Transverse colon (tissue), 4 donors: ENCODE measurements at regions of chr4 and their contacts with region 1.

Region 1: DNA sequence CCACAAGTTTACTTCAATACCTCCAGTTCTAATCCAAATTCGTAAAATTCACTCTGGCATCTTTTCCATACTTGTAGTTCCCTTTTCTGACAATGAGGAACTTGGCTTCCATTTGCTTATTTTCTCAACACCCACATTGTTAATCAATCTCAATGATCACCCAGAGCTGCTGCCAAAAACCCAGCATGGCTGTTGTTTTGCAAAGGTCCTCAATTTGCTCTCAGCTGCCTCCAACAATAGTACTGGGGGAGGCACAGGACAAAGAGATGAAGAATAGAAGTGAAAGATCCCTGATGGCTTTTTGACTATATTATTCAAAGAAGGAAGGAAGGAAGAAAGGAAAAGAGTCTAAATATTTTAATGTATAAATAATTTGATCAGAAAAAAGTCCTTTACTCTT is 847.8 kb downstream of the RAPGEF2 start:
- DNase-seq: no peak
- H3K4me3 ChIP-seq: no peak overlapping the region
- H3K27ac ChIP-seq: no peak overlapping the region
- H3K4me1 ChIP-seq: no peaks in the 10 kb centered on the region
- H3K27me3 ChIP-seq: no peaks in the 10 kb centered on the region
- CTCF ChIP-seq: no peak
- EP300 ChIP-seq: no peak
- POLR2A ChIP-seq: no peak

Region 2: GRCh38 chr4:159735281-159736207 is 215.2 kb before region 1 on chr4:
- in situ Hi-C with region 1: no loop called
- intact Hi-C with region 1: no loop called
- DNase-seq: no peak
- H3K4me3 ChIP-seq: no peak overlapping the region
- H3K27ac ChIP-seq: no peak overlapping the region
- H3K4me1 ChIP-seq: no peaks in the 10 kb centered on the region
- H3K27me3 ChIP-seq: no peaks in the 10 kb centered on the region
- CTCF ChIP-seq: no peak
- EP300 ChIP-seq: no peak
- POLR2A ChIP-seq: no peak

Region 3: DNA sequence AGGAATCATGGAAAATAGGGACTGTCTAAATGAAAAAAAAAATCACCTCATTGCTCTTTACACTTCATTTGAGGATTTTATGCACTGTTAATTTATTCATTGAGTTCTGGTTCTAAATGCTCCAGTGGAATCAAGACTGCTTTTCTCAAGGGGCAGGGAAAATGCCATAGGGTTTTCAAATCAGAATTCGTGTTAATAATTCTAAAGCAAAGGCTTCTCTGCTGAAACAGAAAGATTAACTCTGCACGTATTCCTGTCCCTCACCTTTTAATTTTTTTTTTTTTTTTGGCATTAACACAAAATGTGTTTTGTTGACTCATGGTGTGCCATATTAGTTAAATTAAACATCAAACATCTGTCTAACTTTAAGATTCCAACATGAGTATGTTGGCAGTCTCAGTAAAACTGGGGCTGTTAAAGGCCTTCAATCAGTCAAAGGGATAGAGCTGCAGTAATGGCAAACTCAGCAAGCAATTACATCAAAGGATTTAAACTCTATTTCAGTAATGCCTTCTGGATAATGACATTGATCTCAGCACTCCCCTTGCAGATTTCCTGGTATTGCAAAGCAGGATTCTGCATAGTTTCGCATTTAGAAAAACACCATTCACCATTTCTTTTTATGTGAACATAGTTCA is 30.2 kb after region 1 on chr4:
- in situ Hi-C with region 1: no loop called
- intact Hi-C with region 1: loop called (anchors 1 kb)
- DNase-seq: no peak
- H3K4me3 ChIP-seq: no peak overlapping the region
- H3K27ac ChIP-seq: no peak overlapping the region
- H3K4me1 ChIP-seq: peaks cover 0 to 3% (median 0%) of the 10 kb centered on the region in 4 donors
- H3K27me3 ChIP-seq: no peaks in the 10 kb centered on the region
- CTCF ChIP-seq: no peak
- EP300 ChIP-seq: no peak
- POLR2A ChIP-seq: no peak